B cell (primary cell): ENCODE measurements at regions of chr3 and their contacts with region 1.

Region 1: GRCh38 chr3:186772701-186773424 is 10.5 kb upstream of the EIF4A2 start:
- DNase-seq: peak; percentile 87
- ATAC-seq: peak; percentile 93
- H3K4me3 ChIP-seq: peak overlapping the region; percentile 50 to 98 (median 79)
- H3K4me3 Mint-ChIP-seq: peak overlapping the region; percentile 93
- H3K27ac ChIP-seq: peak overlapping the region; percentile 69 to 87
- H3K27ac Mint-ChIP-seq: peak overlapping the region; percentile 91
- H3K4me1 ChIP-seq: peaks cover 11 to 12% of the 10 kb centered on the region in 2 donors
- H3K4me1 Mint-ChIP-seq: peaks cover 17% of the 10 kb centered on the region
- H3K27me3 ChIP-seq: no peaks in the 10 kb centered on the region
- H3K27me3 Mint-ChIP-seq: no peaks in the 10 kb centered on the region
- CTCF ChIP-seq: no peak

Region 2: GRCh38 chr3:186653080-186653707 is 119.7 kb before region 1 on chr3:
- CTCF ChIA-PET with region 1: interaction called, 3 read pairs
- POLR2A ChIA-PET with region 1: no interaction called
- intact Hi-C with region 1: loop called (anchors 10 kb)
- DNase-seq: peak; percentile 76
- ATAC-seq: peak; percentile 95
- H3K4me3 ChIP-seq: peak overlapping the region in 1 of 5 experiments; percentile 33
- H3K4me3 Mint-ChIP-seq: peak overlapping the region; percentile 69
- H3K27ac ChIP-seq: peak overlapping the region; percentile 34 to 86
- H3K27ac Mint-ChIP-seq: peak overlapping the region; percentile 92
- H3K4me1 ChIP-seq: peaks cover 28 to 29% of the 10 kb centered on the region in 2 donors
- H3K4me1 Mint-ChIP-seq: peaks cover 26% of the 10 kb centered on the region
- H3K27me3 ChIP-seq: no peaks in the 10 kb centered on the region
- H3K27me3 Mint-ChIP-seq: no peaks in the 10 kb centered on the region
- CTCF ChIP-seq: no peak

Region 3: DNA sequence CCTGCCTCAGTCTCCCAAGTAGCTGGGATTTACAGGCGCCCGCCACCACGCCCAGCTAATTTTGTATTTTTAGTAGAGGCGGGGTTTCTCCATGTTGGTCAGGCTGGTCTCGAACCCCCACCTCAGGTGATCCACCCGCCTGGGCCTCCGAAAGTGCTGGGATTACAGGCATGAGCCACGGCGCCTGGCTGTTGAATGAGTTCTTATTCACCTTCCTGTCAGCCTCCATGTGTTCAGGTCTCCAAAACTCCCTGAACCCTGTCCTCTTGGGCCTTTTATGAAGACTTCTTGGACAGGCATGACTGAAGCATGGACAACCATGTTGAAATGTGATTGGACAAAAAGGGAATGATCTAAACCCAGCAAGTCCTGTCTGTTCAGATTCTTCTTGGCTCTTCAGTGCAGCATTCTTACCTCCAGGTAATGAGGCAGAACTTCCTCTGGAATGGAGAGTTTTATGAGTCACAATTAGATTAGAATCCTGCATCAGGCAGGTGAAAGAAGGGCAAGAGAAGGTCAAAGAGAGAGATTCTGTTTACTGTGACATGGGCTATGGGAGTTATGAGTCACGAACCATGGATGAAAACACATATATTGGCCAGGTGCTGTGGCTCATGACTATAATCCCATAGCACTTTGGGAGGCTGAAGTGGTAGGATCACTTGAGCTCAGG is 12.6 kb before region 1 on chr3:
- CTCF ChIA-PET with region 1: no interaction called
- POLR2A ChIA-PET with region 1: no interaction called
- intact Hi-C with region 1: no loop called
- DNase-seq: no peak
- ATAC-seq: no peak
- H3K4me3 ChIP-seq: no peak overlapping the region
- H3K4me3 Mint-ChIP-seq: no peak overlapping the region
- H3K27ac ChIP-seq: no peak overlapping the region
- H3K27ac Mint-ChIP-seq: no peak overlapping the region
- H3K4me1 ChIP-seq: no peaks in the 10 kb centered on the region
- H3K4me1 Mint-ChIP-seq: no peaks in the 10 kb centered on the region
- H3K27me3 ChIP-seq: no peaks in the 10 kb centered on the region
- H3K27me3 Mint-ChIP-seq: peaks cover 7% of the 10 kb centered on the region
- CTCF ChIP-seq: no peak

Region 4: GRCh38 chr3:186806089-186807055 is 33.5 kb after region 1 on chr3 and contains the start of gene RFC4:
- CTCF ChIA-PET with region 1: no interaction called
- POLR2A ChIA-PET with region 1: interaction called, 3 read pairs
- intact Hi-C with region 1: loop called (anchors 5 kb)
- DNase-seq: peak; percentile 88
- ATAC-seq: peak; percentile 91
- H3K4me3 ChIP-seq: peak within 1 kb of the TSS; percentile 78 to 96 (median 90)
- H3K4me3 Mint-ChIP-seq: peak within 1 kb of the TSS; percentile 99
- H3K27ac ChIP-seq: peak within 1 kb of the TSS; percentile 78 to 86
- H3K27ac Mint-ChIP-seq: peak within 1 kb of the TSS; percentile 97
- H3K4me1 ChIP-seq: peaks cover 15 to 19% of the 10 kb centered on the region in 2 donors
- H3K4me1 Mint-ChIP-seq: peaks cover 20% of the 10 kb centered on the region
- H3K27me3 ChIP-seq: no peaks in the 10 kb centered on the region
- H3K27me3 Mint-ChIP-seq: no peaks in the 10 kb centered on the region
- CTCF ChIP-seq: no peak
- total RNA-seq, gene RFC4: 17.8 and 21.0 TPM in 2 replicates